ENCODE measurements at regions of chr2 and their contacts with region 1.

Region 1: DNA sequence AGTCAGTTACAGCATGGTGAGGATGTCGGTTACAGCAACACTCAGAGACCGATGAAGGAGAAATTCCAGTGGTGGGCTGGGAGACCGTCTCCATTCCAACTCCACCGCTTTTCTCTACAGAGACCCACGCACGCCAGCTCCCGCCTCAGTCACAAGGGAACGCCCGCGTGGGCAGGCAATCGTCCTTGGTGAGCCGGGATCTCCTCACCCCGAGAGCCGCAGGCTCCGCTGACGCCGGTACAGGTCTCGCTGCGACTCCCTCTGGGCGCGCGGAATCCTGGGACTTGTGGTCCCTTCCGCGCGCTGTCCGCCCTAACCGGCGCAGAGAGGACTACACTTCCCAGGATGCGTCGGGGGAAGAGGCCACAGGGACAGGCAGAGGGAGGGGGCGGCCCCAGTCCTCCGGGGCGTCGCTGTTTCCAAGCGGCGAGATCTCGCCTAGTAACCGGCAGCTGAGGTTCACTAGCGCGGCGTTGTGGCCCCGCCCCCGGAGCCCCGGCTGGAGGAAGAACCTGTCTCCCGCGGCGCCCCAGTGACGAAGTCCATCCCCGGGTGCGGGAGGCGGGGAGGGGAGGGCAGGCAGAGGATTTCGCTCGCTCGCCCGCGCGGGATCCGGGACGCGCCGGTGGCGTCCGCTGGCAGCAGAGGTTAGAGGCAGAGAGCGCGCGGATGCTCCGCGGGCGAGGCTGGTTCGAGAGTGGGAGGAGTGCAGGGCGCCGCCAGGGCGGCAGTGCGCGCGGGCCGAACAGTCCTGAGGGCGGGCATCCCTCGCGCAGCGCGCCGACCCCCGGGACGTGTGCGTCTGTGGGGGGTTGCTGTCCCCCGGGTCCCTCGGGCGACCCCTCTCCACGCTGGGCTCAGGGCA is at the start of gene EML6:
- DNase-seq: peak; percentile 97
- ATAC-seq: peak; percentile 95
- H3K4me3 Mint-ChIP-seq: peak within 1 kb of the TSS; percentile 95
- H3K27ac Mint-ChIP-seq: peak within 1 kb of the TSS; percentile 74
- H3K4me1 Mint-ChIP-seq: peaks cover 26% of the 10 kb centered on the region
- H3K27me3 Mint-ChIP-seq: peaks cover 9% of the 10 kb centered on the region
- CTCF ChIP-seq: no peak
- total RNA-seq, gene EML6: 25.3 and 31.5 TPM in 2 replicates

Region 2: DNA sequence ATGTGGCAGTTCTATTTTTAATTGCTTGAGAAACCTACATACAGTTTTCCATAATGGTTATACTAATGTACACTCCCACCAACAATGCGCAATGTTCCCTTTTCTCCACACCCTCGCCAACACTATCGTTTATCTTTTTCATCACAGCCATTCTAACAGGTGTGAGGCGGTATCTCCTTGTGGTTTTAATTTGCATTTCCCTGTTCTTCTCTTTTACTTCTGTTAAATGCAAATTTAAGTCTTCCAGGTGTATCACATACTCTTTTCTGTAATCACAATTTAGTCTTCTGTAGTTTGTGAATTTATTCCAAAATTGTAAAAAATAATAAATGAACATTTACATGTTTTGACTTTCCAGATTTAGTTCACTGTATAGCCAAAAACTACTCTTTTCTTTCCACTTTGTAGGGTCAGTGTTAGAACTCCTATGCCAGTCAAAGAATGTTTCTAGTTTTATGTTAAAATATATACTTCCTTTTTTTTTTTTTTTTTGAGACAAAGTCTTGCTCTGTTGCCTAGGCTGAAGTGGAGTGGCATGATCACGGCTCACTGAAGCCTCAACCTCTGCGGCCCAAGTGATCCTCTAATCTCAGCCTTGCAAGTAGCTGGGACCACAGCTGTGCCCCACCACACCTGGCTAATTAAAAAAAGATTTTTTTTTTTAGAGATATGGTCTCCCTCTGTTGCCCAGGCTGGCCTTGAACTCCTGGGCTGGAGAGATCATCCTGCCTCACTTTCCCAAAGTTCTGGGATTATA is 623.4 kb before region 1 on chr2:
- CTCF ChIA-PET with region 1: no interaction called
- POLR2A ChIA-PET with region 1: interaction called, 9 read pairs
- intact Hi-C with region 1: loop called (anchors 1 kb)
- DNase-seq: peak; percentile 45
- ATAC-seq: peak; percentile 75
- H3K4me3 Mint-ChIP-seq: peak overlapping the region; percentile 52
- H3K27ac Mint-ChIP-seq: peak overlapping the region; percentile 91
- H3K4me1 Mint-ChIP-seq: peaks cover 81% of the 10 kb centered on the region
- H3K27me3 Mint-ChIP-seq: no peaks in the 10 kb centered on the region
- CTCF ChIP-seq: no peak

Region 3: GRCh38 chr2:54673501-54673998 is 49.8 kb before region 1 on chr2:
- CTCF ChIA-PET with region 1: interaction called, 3 read pairs
- POLR2A ChIA-PET with region 1: no interaction called
- intact Hi-C with region 1: loop called (anchors 2 kb)
- DNase-seq: no peak
- ATAC-seq: peak; percentile 56
- H3K4me3 Mint-ChIP-seq: peak overlapping the region; percentile 64
- H3K27ac Mint-ChIP-seq: peak overlapping the region; percentile 84
- H3K4me1 Mint-ChIP-seq: peaks cover 34% of the 10 kb centered on the region
- H3K27me3 Mint-ChIP-seq: no peaks in the 10 kb centered on the region
- CTCF ChIP-seq: no peak

Region 4: GRCh38 chr2:54691445-54692135 is 31.8 kb before region 1 on chr2:
- CTCF ChIA-PET with region 1: no interaction called
- POLR2A ChIA-PET with region 1: no interaction called
- intact Hi-C with region 1: no loop called
- DNase-seq: no peak
- ATAC-seq: no peak
- H3K4me3 Mint-ChIP-seq: no peak overlapping the region
- H3K27ac Mint-ChIP-seq: no peak overlapping the region
- H3K4me1 Mint-ChIP-seq: no peaks in the 10 kb centered on the region
- H3K27me3 Mint-ChIP-seq: peaks cover 3% of the 10 kb centered on the region
- CTCF ChIP-seq: no peak

Region 5: DNA sequence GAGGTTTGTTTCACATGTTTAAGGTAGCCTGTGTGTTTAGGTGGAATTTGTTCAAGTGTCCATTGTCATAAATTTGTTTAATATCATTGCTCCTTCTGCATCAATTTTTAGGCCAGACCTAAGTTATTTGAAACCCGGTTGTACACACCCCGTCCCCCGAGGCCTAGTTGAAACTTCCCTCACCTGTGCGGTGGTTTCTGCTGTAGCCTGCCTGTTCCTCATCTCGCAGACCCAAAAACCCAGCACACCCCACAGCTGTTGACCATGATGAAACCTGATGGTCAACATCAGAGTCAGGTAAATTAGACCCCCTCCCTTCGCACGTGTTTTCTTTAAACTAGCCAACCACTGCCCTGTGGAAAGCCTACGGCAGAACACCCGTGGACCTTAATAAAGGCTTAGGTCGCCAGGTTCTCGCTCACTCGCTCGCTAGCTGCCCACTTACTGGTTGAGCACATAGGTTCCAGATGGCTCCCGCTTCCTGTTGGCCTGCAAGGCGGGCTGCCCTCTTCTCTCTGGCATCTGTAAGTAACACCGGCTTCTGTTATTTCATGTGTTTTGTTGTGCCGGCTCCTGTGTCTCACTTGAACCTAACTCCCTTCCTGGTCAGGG is 64.5 kb after region 1 on chr2:
- CTCF ChIA-PET with region 1: no interaction called
- POLR2A ChIA-PET with region 1: interaction called, 7 read pairs
- intact Hi-C with region 1: loop called (anchors 2 kb)
- DNase-seq: peak; percentile 15
- ATAC-seq: peak; percentile 75
- H3K4me3 Mint-ChIP-seq: peak overlapping the region; percentile 63
- H3K27ac Mint-ChIP-seq: peak overlapping the region; percentile 78
- H3K4me1 Mint-ChIP-seq: peaks cover 41% of the 10 kb centered on the region
- H3K27me3 Mint-ChIP-seq: no peaks in the 10 kb centered on the region
- CTCF ChIP-seq: no peak

Region 6: GRCh38 chr2:55232084-55232862 is 508.9 kb after region 1 on chr2 and contains the starts of genes CLHC1 and RPS27A:
- CTCF ChIA-PET with region 1: no interaction called
- POLR2A ChIA-PET with region 1: no interaction called
- intact Hi-C with region 1: loop called (anchors 5 kb)
- DNase-seq: peak; percentile 92
- ATAC-seq: peak; percentile 86
- H3K4me3 Mint-ChIP-seq: peak within 1 kb of the TSS; percentile 99
- H3K27ac Mint-ChIP-seq: peak within 1 kb of the TSS; percentile 98
- H3K4me1 Mint-ChIP-seq: peaks cover 58% of the 10 kb centered on the region
- H3K27me3 Mint-ChIP-seq: no peaks in the 10 kb centered on the region
- CTCF ChIP-seq: no peak
- total RNA-seq, gene CLHC1: 7.1 and 10.5 TPM in 2 replicates
- total RNA-seq, gene RPS27A: 1,833 and 2,316 TPM in 2 replicates

Measured in activated B cell treated with CpG ODN at 0.5 μM for 24 hours (primary cell).